Body of pancreas (tissue), 4 donors: ENCODE measurements at regions of chr7 and their contacts with region 1.

Region 1: DNA sequence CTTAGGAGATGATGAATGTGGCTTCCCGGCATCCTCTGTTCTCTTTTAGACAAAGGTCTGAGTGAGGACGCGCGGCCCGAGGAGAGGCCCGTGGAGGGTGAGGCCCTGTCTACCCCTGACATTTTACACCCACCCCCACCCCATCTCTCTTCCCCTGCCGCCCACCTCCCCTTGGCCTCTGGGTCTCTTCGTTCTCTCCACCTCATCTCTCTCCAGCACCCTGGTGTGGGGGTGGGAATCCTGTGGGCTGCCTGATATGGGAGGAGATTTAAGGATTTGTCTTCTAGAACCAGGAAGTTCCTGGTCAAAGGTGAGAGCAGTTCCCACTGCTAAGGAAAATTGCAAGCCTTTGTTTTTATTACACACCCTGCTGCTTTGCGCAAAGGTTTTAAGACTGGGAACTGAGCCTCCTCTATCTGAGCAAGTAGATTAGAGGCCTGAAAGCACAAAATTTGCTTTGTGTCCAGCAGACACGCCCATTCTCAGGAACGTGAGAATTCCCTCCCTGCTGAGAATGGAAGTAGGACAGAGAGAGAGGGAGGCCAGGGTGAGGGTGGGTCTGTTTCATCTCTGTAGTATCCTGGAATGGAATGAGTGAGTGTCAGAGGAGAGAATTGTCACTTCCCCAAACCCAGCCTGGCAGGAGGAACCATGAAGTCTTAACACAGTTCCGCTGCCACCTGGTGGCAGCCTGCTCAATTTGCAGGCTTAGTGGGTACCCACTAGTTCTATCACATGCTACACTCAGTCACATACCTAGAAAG is 91.2 kb downstream of the GTF2IRD1 start:
- DNase-seq: peak; percentile 62 to 79 (median 72)
- ATAC-seq: peak; percentile 83
- H3K4me3 ChIP-seq: no peak overlapping the region
- H3K27ac ChIP-seq: no peak overlapping the region
- H3K4me1 ChIP-seq: no peaks in the 10 kb centered on the region
- H3K27me3 ChIP-seq: no peaks in the 10 kb centered on the region
- CTCF ChIP-seq: peak; percentile 40 to 78 (median 60)
- POLR2A ChIP-seq: no peak

Region 2: DNA sequence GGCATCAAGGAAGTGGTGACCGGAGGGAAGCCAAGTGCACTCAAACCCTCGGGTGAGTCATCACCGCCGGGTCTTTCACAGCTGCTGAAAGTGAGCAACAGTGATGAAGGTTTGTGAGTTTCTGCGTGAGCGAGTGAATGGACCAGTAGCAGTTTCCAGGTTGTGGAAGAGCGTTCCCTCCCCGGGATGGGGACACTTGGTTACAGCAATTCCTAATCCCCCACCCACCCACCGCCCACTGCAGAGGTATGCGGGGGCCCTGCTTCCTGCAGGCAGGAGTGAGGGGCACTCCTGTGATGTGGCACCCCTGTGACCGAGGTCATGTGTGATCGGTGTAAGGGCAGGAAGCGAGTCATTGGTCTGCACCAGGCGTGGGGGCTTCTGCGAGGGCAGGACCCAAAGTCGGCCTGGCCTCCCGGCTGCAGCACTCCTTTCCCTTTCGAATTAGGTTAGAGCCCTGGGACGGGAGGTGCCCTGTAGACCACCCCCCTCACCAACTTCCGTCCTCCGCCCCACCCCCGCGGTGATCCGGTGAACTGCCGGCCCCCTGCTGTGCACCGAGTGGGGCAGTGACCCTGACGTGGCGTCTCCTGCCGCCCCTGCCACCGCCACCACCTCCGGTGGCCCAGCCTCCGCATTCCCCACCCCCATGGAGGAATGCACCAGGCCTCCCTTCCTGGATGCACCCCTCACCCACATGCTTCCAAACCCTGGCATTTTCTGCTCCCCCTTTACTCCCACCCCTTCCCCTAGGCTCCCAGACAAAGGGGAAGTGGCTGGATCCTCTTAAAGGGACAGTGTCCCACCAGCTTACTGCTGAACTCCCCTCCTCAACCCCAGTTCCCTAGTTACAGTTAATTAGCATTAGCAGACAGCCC is 450.4 kb before region 1 on chr7:
- intact Hi-C with region 1: no loop called
- DNase-seq: peak; percentile 49 to 80 (median 65)
- ATAC-seq: peak; percentile 76
- H3K4me3 ChIP-seq: peak overlapping the region in 1 of 2 donors; percentile 7
- H3K27ac ChIP-seq: peak overlapping the region; percentile 52 to 80 (median 63)
- H3K4me1 ChIP-seq: peaks cover 16% of the 10 kb centered on the region
- H3K27me3 ChIP-seq: no peaks in the 10 kb centered on the region
- CTCF ChIP-seq: no peak
- POLR2A ChIP-seq: peak in 2 of 3 donors; percentile 19 to 28

Region 3: DNA sequence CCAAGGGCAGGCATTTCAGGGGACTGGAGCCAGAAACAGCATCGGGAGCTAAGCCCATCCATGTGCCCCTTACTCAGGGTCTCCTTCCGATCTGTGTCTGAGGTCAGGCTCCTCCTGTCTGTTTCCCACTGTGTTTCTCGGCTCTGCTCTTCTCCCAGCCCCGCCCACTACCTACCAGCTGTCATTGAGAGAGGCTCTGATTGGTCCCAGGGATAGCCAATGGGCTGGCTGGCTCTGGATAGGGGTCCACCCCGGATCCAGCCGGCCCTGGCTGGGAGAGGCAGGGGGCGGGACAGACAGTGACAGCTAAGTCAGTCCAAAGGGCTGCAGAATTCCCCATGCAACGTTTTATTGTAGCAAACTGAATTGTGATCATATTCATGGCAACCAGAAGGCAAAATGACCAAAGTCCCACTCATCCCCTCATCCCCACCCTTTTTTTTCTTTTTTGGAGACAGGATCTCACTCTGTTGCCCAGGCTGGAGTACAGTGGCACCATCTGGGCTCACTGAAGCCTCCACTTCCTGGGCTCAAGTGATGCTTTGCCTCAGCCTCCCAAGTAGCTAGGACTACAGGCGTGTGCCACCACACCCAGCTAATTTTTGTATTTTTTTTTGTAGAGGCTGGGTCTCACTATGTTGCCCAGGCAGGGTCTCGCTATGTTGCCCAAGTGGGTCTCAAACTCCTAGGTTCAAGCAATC is 179.4 kb before region 1 on chr7:
- intact Hi-C with region 1: no loop called
- DNase-seq: peak in 1 of 4 donors; percentile 31
- ATAC-seq: peak; percentile 42
- H3K4me3 ChIP-seq: no peak overlapping the region
- H3K27ac ChIP-seq: no peak overlapping the region
- H3K4me1 ChIP-seq: no peaks in the 10 kb centered on the region
- H3K27me3 ChIP-seq: no peaks in the 10 kb centered on the region
- CTCF ChIP-seq: no peak
- POLR2A ChIP-seq: no peak

Region 4: GRCh38 chr7:74412056-74412455 is 132.8 kb before region 1 on chr7:
- intact Hi-C with region 1: loop called (anchors 5 kb)
- DNase-seq: no peak
- ATAC-seq: no peak
- H3K4me3 ChIP-seq: no peak overlapping the region
- H3K27ac ChIP-seq: no peak overlapping the region
- H3K4me1 ChIP-seq: no peaks in the 10 kb centered on the region
- H3K27me3 ChIP-seq: no peaks in the 10 kb centered on the region
- CTCF ChIP-seq: no peak
- POLR2A ChIP-seq: no peak

Region 5: DNA sequence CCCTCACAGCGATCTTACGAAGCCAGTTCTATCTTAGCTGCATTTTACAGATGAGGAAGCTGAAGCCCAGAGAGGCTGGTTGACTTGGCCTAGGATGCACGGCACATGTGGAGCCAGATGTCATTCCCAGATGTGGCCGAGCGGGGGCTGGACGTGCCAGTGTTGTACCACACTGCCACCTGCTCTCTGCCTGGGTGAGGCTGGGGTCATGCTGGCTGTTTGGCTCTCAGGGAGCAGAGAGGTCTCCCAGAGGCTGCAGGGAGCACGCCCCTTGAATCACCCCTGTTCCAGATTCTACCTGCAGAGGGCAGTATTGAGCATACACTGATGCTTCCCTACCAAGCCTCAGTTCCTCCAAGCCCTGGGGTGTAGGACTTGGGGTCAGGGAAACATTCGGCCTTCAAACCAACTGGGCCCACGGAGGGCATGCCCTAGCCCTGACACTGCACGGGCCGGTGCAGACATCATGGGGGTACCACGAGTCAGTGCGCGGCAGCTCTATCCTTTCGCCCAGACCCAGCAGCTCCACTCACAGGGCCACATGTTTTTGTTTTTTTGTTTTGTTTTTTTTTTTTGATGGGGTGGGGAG is 95.0 kb before region 1 on chr7:
- intact Hi-C with region 1: no loop called
- DNase-seq: peak; percentile 61 to 76 (median 69)
- ATAC-seq: no peak
- H3K4me3 ChIP-seq: no peak overlapping the region
- H3K27ac ChIP-seq: no peak overlapping the region
- H3K4me1 ChIP-seq: peaks cover 17% of the 10 kb centered on the region
- H3K27me3 ChIP-seq: no peaks in the 10 kb centered on the region
- CTCF ChIP-seq: peak; percentile 60 to 82 (median 75)
- POLR2A ChIP-seq: no peak